OCI-LY7 (cell line): ENCODE measurements at regions of chr11 and their contacts with region 1.

Region 1: DNA sequence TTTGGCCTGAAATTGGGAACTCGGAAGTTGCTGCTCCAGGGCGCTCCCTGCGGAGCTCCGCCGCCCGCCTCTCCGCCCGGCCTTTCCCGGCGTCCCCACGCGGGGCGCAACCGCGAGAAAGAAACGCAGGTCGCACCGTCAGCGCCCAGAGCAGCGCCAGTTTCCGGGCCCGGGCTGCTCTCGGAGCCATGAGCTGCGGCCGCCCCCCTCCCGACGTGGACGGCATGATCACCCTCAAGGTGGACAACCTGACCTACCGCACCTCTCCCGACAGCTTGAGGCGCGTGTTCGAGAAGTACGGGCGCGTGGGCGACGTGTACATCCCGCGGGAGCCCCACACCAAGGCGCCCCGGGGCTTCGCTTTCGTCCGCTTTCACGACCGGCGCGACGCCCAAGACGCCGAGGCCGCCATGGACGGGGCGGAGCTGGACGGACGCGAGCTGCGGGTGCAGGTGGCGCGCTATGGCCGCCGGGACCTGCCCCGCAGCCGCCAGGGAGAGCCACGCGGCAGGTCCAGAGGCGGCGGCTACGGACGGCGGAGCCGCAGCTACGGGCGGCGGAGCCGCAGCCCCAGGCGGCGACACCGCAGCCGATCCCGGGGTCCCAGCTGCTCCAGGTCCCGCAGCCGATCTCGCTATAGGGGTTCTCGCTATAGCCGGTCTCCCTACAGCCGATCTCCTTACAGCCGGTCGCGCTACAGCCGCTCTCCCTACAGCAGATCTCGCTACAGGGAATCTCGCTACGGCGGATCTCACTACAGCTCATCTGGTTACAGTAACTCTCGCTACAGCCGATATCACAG is 521 bp downstream of the SRSF8 start:
- DNase-seq: peak; percentile 79
- H3K4me3 ChIP-seq: peak overlapping the region; percentile 87
- H3K27ac ChIP-seq: peak overlapping the region; percentile 77
- H3K4me1 ChIP-seq: peaks cover 13% of the 10 kb centered on the region
- CTCF ChIP-seq: peak; percentile 63

Region 2: DNA sequence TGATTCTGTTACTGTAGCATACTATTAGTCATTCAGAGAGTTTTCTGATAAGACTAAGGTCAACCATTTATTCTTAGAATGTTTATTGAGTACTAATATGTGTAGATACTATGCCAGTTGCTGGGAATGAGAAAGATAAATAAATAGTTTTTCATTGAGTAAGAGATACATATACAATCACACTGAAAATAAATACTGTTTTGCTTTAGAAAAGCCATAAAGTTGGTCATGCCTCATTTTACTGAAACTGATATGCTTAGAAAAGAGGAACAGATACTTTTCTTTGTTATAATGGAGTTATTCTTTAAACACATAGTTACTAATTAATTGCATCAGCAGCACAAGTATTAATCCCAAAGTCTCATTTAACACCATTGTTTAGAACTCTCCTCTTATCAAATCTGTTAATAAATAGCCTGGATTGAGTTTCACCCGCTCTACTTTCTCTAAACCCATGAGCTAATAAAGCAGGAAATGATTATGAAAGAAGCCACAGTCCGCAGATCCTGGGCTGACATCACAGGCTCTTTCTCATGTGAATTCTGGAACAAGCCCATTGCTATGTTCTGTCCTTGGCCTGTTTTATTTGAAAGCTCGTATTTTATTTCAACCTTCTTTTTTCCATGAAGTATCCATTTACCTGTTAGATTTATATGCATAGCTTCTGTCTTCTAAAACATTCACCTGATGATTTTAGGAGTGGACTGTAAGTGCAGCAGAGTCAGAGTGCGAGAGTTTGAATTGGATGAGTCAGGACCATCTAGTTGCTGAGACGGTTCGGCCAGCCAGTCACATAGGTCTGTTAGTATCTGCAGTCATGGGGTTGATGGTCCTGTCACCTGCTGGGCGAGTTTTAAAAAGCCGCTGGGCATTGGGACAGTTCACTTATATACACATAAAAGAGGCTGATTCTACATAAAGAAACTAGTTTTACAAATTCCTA is 464.5 kb before region 1 on chr11:
- CTCF ChIA-PET with region 1: no interaction called
- POLR2A ChIA-PET with region 1: no interaction called
- intact Hi-C with region 1: loop called (anchors 10 kb)
- DNase-seq: peak; percentile 75
- H3K4me3 ChIP-seq: peak overlapping the region; percentile 25
- H3K27ac ChIP-seq: peak overlapping the region; percentile 61
- H3K4me1 ChIP-seq: peaks cover 19% of the 10 kb centered on the region
- CTCF ChIP-seq: peak; percentile 75

Region 3: GRCh38 chr11:95089620-95090542 is 22.6 kb after region 1 on chr11 and contains the start of gene ENDOD1:
- CTCF ChIA-PET with region 1: interaction called, 18 read pairs
- POLR2A ChIA-PET with region 1: interaction called, 68 read pairs
- intact Hi-C with region 1: loop called (anchors 1 kb)
- DNase-seq: peak; percentile 88
- H3K4me3 ChIP-seq: peak within 1 kb of the TSS; percentile 82
- H3K27ac ChIP-seq: peak within 1 kb of the TSS; percentile 47
- H3K4me1 ChIP-seq: peaks cover 55% of the 10 kb centered on the region
- CTCF ChIP-seq: 0 out of 2 replicates have a peak, but pooled peaks have one; percentile 10
- total RNA-seq, gene ENDOD1: 18.5 and 20.4 TPM in 2 replicates

Region 4: GRCh38 chr11:95138448-95138847 is 71.2 kb after region 1 on chr11:
- CTCF ChIA-PET with region 1: interaction called, 4 read pairs
- POLR2A ChIA-PET with region 1: interaction called, 24 read pairs
- intact Hi-C with region 1: loop called (anchors 1 kb)
- DNase-seq: peak; percentile 64
- H3K4me3 ChIP-seq: no peak overlapping the region
- H3K27ac ChIP-seq: no peak overlapping the region
- H3K4me1 ChIP-seq: no peaks in the 10 kb centered on the region
- CTCF ChIP-seq: peak; percentile 81

Region 5: DNA sequence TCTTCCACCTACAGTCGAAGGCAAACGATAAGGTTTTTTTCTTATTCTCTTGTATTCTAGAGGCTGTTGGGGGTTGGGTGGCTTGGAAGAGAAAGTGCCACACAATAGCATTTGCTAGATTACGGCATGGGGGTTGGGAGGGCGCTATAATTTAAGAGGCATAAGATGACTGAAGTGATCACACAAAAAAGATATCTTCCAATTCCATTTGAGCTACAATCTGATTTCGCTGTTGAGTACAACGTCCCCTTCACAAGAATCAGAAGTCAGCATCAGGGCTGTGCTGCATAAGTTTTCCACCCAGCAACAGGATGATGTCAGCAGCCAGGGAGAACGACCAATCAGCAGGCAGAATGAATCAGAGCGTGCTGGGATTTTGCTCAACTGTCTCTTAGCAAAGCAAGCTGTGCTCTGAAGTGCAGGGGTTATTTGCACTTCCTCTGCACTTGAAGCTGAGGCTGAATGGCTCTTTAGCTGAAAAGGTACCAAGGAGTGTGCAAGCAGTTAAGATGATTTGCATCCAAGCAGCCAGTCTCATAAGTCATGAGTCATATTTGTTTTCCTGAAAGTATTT is 187.0 kb after region 1 on chr11:
- CTCF ChIA-PET with region 1: no interaction called
- POLR2A ChIA-PET with region 1: interaction called, 21 read pairs
- intact Hi-C with region 1: loop called (anchors 2 kb)
- DNase-seq: peak; percentile 96
- H3K4me3 ChIP-seq: peak overlapping the region; percentile 45
- H3K27ac ChIP-seq: peak overlapping the region; percentile 85
- H3K4me1 ChIP-seq: peaks cover 66% of the 10 kb centered on the region
- CTCF ChIP-seq: no peak

Region 6: GRCh38 chr11:95764267-95764898 is 697.1 kb after region 1 on chr11:
- CTCF ChIA-PET with region 1: no interaction called
- POLR2A ChIA-PET with region 1: no interaction called
- intact Hi-C with region 1: loop called (anchors 5 kb)
- DNase-seq: peak; percentile 67
- H3K4me3 ChIP-seq: no peak overlapping the region
- H3K27ac ChIP-seq: no peak overlapping the region
- H3K4me1 ChIP-seq: no peaks in the 10 kb centered on the region
- CTCF ChIP-seq: peak; percentile 90